Dendritic cell treated with granulocyte-macrophage colony-stimulating factor and Interleukin-4, amounts not matched to agents 40 ng/mL and 50 ng/mL, for 4 days (primary cell): ENCODE measurements at regions of chr19 and their contacts with region 1.

Region 1: GRCh38 chr19:21767065-21767800 is at the start of gene ZNF100:
- H3K4me3 Mint-ChIP-seq: peak within 1 kb of the TSS; percentile 99
- H3K27ac Mint-ChIP-seq: peak within 1 kb of the TSS; percentile 100
- H3K4me1 Mint-ChIP-seq: peaks cover 8% of the 10 kb centered on the region
- H3K27me3 Mint-ChIP-seq: no peaks in the 10 kb centered on the region

Region 2: DNA sequence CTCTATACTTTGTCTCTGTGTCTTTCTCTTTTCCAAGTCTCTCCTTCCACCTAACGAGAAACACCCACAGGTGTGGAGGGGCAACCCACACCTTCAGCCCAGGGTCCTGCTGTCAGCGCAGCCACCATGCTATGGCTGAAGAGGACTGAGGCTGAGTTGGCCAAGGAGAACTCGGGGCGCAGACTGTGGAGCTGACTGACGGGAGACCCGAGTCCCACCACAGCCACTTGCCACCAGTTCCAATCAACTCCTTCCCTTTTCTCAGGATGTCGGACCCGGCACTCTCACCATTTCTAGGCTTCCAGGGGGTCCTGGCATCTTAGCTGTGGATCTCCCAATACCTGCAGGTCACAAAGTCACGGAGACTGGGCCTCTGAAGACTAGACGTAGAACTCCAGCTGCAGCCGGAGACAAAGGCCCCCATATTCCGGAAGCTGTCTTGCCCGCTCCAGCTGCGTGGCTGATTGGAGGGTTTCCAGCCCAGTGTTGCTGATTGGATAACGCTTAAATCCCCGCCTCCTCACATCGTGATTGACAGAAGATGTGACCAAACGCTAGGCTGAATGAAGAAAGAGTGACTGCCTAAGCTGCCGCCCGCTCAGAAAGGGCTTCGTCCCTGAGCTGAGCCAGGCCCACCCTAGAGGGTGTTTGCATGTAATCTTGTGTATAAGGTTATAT is 198.3 kb before region 1 on chr19:
- intact Hi-C with region 1: loop called (anchors 1 kb)
- H3K4me3 Mint-ChIP-seq: peak overlapping the region; percentile 97
- H3K27ac Mint-ChIP-seq: peak overlapping the region; percentile 98
- H3K4me1 Mint-ChIP-seq: peaks cover 25% of the 10 kb centered on the region
- H3K27me3 Mint-ChIP-seq: no peaks in the 10 kb centered on the region

Region 3: GRCh38 chr19:21786931-21787330 is 19.7 kb after region 1 on chr19:
- intact Hi-C with region 1: no loop called
- H3K4me3 Mint-ChIP-seq: no peak overlapping the region
- H3K27ac Mint-ChIP-seq: no peak overlapping the region
- H3K4me1 Mint-ChIP-seq: no peaks in the 10 kb centered on the region
- H3K27me3 Mint-ChIP-seq: no peaks in the 10 kb centered on the region

Region 4: GRCh38 chr19:21835810-21836444 is 68.7 kb after region 1 on chr19 and contains the start of gene ZNF43:
- intact Hi-C with region 1: loop called (anchors 2 kb)
- H3K4me3 Mint-ChIP-seq: peak within 1 kb of the TSS; percentile 100
- H3K27ac Mint-ChIP-seq: peak within 1 kb of the TSS; percentile 99
- H3K4me1 Mint-ChIP-seq: peaks cover 6% of the 10 kb centered on the region
- H3K27me3 Mint-ChIP-seq: no peaks in the 10 kb centered on the region

Region 5: GRCh38 chr19:21851596-21852345 is 84.5 kb after region 1 on chr19:
- intact Hi-C with region 1: loop called (anchors 5 kb)
- H3K4me3 Mint-ChIP-seq: peak overlapping the region; percentile 91
- H3K27ac Mint-ChIP-seq: peak overlapping the region; percentile 88
- H3K4me1 Mint-ChIP-seq: no peaks in the 10 kb centered on the region
- H3K27me3 Mint-ChIP-seq: no peaks in the 10 kb centered on the region